ENCODE measurements at regions of chr7 and their contacts with region 1.

Region 1: GRCh38 chr7:131654668-131655326 is 98.4 kb upstream of the PODXL start:
- DNase-seq: peak; percentile 85
- H3K4me3 ChIP-seq: no peak overlapping the region
- H3K27ac ChIP-seq: no peak overlapping the region
- H3K4me1 ChIP-seq: peaks cover 0 to 4% (median 0%) of the 10 kb centered on the region in 4 donors
- H3K27me3 ChIP-seq: peaks cover 3% of the 10 kb centered on the region
- CTCF ChIP-seq: peak; percentile 89 to 96 (median 92)
- EP300 ChIP-seq: no peak
- POLR2A ChIP-seq: no peak

Region 2: DNA sequence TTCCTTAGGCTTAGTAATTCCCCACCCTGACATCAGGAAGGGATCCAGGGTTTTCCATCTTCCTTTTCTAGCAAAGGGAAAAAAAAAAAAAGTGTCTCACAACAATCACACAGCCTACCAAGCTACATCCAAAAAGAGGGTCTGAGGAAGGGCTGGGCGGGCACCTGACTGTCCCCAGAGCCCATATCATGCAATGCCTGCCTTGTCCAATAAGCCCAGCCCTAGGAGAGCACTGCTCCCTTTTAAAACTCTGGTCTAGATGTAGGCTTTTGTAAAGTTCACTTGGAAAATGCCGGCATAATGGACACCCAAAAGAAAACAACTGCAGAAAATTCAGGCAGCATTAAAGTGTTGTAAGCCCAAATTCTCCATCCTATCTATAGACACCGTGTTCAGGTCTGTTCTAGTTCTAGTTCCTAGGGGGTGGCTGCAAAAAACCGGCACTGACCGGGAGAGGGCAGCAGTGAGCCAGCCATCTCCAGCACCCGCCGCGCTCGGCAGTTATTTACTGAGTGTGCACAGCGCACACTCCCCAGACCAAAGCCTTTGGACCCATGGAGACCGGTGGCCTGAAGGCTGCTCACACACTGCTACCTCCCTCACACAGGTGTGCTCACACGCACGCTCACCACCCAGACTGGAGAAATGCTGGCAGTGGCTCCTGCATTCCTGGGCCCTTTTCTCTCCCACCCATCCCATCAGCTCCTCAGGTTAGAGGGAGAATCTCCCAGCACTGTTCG is 147.0 kb before region 1 on chr7:
- in situ Hi-C with region 1: loop called (anchors 5 to 10 kb)
- intact Hi-C with region 1: loop called (anchors 2 kb)
- DNase-seq: peak; percentile 87
- H3K4me3 ChIP-seq: no peak overlapping the region
- H3K27ac ChIP-seq: no peak overlapping the region
- H3K4me1 ChIP-seq: peaks cover 3 to 18% (median 7%) of the 10 kb centered on the region in 4 donors
- H3K27me3 ChIP-seq: peaks cover 5% of the 10 kb centered on the region
- CTCF ChIP-seq: peak; percentile 89 to 93 (median 91)
- EP300 ChIP-seq: no peak
- POLR2A ChIP-seq: no peak

Region 3: DNA sequence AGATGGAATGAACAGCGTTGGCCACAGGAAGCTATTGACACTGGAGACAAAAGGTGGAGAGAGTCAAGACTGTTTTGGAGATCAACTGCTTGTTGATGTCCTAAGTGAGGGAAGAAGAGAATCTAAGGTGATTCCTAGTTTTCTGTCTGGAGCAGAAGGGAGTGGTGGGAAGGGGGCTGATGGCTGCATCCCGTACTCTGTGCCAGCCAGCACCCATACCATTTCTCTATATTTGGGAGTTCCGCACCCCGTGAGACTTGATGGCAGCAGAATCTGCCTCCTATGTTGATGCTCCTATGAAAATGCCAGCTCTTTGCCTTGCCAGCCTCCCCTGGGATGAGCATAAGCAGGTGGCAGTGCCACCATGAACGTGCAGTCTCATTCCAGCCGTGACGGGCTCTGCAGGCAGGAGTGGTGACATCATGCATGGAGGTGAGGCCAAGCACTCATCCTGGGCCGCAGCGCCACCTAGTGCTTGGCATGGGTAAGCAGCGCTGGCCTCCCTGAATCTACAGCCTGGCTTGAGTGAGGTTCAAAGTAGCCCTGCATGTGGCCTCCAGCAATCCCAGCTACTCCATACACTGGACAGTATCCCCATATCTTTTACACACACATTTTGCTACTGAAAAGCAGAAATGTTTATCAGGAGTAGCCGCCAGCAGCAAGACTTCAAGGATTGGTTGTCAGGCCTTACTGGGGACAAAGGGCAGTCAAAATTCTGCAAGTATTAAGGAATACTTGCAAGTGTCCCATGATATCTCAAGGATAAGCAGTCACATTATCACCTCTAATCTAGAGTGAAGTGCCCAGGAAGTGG is 141.3 kb before region 1 on chr7:
- in situ Hi-C with region 1: loop called (anchors 5 to 10 kb)
- intact Hi-C with region 1: no loop called
- DNase-seq: peak; percentile 85
- H3K4me3 ChIP-seq: no peak overlapping the region
- H3K27ac ChIP-seq: peak overlapping the region in 1 of 4 donors; percentile 19
- H3K4me1 ChIP-seq: peaks cover 0 to 8% (median 1%) of the 10 kb centered on the region in 4 donors
- H3K27me3 ChIP-seq: no peaks in the 10 kb centered on the region
- CTCF ChIP-seq: peak; percentile 81 to 95 (median 95)
- EP300 ChIP-seq: no peak
- POLR2A ChIP-seq: no peak

Region 4: GRCh38 chr7:131769226-131769625 is 114.4 kb after region 1 on chr7:
- in situ Hi-C with region 1: no loop called
- intact Hi-C with region 1: no loop called
- DNase-seq: no peak
- H3K4me3 ChIP-seq: no peak overlapping the region
- H3K27ac ChIP-seq: no peak overlapping the region
- H3K4me1 ChIP-seq: no peaks in the 10 kb centered on the region
- H3K27me3 ChIP-seq: no peaks in the 10 kb centered on the region
- CTCF ChIP-seq: no peak
- EP300 ChIP-seq: no peak
- POLR2A ChIP-seq: no peak

Measured in transverse colon (tissue), 4 donors.